Activated B cell treated with CpG ODN at 0.5 μM for 24 hours (primary cell): ENCODE measurements at regions of chr7 and their contacts with region 1.

Region 1: DNA sequence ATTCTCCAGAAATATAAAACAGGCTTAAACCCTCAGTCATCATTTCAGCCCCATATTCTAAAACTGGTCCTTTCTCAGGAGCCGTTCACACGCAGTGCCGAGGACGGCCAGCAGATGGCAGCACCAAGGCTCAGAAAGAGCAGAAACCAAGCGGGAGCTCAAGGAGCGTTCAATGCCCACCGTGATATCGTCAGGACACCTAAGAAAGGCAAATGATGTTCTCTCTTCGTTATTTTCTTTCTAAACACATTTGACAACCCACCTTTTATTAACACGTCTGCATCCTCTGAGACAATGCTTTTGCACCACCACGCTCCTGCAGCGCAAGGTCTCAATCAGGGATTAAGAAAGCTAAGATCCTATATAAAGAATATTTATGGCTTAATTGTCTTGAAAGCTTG is 45.7 kb upstream of the RBM33 start:
- DNase-seq: peak; percentile 79
- ATAC-seq: peak; percentile 70
- H3K4me3 Mint-ChIP-seq: no peak overlapping the region
- H3K27ac Mint-ChIP-seq: no peak overlapping the region
- H3K4me1 Mint-ChIP-seq: peaks cover 3% of the 10 kb centered on the region
- H3K27me3 Mint-ChIP-seq: peaks cover 18% of the 10 kb centered on the region
- CTCF ChIP-seq: no peak

Region 2: DNA sequence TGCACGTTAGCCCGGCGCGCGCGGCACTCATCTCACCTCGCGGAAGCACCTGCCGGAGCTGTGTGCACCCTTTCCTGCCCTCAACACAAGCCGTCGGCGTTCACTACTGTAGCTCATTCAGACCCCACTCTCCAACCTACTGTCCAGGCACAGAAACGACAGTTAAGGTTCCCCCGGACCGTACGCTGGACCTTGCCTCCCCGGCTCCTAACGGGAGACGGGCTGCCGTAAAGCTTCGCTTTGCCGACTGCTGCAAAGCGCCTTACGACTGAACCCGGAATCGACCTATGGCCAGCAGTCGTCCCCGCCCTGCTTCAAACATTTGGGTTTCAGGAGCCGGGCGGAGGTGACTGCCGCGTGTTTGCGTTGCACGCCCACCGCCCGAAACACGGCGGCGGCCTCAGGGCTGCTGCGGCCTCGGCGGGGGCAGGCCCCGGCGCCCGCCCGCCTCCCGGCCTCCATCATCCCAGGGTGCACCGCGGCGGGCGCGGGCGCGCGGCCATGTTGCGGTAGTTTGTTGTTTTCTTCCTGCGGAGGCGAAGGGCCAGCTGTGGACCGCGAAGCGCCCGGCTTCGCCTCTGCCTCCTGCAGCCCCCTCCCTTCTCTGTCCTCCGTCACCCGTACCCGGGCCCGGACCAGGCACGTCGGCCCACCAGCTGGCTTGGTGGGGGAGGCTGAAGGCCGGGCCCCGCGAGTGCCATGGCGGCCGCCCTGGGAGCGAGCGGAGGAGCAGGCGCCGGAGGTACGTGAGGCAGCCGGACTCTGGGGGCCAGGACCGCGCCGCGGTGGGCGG is 45.6 kb after region 1 on chr7 and contains the start of gene RBM33:
- CTCF ChIA-PET with region 1: interaction called, 6 read pairs
- POLR2A ChIA-PET with region 1: interaction called, 3 read pairs
- intact Hi-C with region 1: loop called (anchors 2 kb)
- DNase-seq: peak; percentile 86
- ATAC-seq: peak; percentile 74
- H3K4me3 Mint-ChIP-seq: peak within 1 kb of the TSS; percentile 98
- H3K27ac Mint-ChIP-seq: peak within 1 kb of the TSS; percentile 98
- H3K4me1 Mint-ChIP-seq: peaks cover 47% of the 10 kb centered on the region
- H3K27me3 Mint-ChIP-seq: no peaks in the 10 kb centered on the region
- CTCF ChIP-seq: no peak
- total RNA-seq, gene RBM33: 107 and 117 TPM in 2 replicates

Region 3: GRCh38 chr7:155738652-155739537 is 140.1 kb after region 1 on chr7:
- CTCF ChIA-PET with region 1: interaction called, 123 read pairs
- POLR2A ChIA-PET with region 1: interaction called, 3 read pairs
- intact Hi-C with region 1: loop called (anchors 1 kb)
- DNase-seq: peak; percentile 42
- ATAC-seq: peak; percentile 64
- H3K4me3 Mint-ChIP-seq: no peak overlapping the region
- H3K27ac Mint-ChIP-seq: no peak overlapping the region
- H3K4me1 Mint-ChIP-seq: peaks cover 58% of the 10 kb centered on the region
- H3K27me3 Mint-ChIP-seq: no peaks in the 10 kb centered on the region
- CTCF ChIP-seq: peak; percentile 30

Region 4: DNA sequence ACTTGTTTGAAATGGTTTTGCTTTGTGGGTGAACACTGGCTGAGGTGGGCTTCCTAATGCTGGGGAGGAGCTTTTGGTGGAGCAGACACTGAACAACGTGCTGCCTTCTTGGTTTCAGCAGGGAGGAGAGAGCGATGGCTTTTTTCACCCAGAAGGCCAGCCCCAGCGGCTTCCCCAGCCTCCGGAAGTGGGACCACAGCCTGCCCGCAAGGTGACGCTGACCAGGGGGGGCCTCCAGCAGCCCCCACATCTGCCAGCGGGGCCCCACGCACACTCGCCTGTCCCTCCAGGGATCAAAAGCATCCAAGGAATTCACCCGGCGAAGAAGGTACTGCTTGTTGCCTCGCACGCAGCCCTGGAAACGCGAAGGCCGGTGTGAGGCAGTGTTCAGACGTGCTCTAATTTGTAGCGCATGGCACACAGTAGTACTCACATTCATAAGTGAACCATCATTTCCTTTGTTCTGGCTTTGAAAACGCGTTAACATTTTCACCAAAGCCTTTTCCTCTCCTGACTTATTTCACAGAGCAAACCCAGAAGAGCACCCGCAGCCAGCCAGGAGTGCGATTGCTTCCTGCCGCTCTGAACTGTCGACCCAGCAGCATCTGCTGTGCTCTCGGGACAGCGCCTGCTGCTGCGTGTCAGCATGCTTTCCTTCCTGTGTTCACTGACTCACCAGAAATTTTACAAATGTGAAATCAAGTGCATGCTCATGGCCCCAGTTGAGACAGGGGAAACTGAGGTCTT is 165.1 kb after region 1 on chr7:
- CTCF ChIA-PET with region 1: interaction called, 109 read pairs
- POLR2A ChIA-PET with region 1: interaction called, 3 read pairs
- intact Hi-C with region 1: loop called (anchors 1 kb)
- DNase-seq: no peak
- ATAC-seq: peak; percentile 54
- H3K4me3 Mint-ChIP-seq: peak overlapping the region; percentile 61
- H3K27ac Mint-ChIP-seq: peak overlapping the region; percentile 85
- H3K4me1 Mint-ChIP-seq: peaks cover 38% of the 10 kb centered on the region
- H3K27me3 Mint-ChIP-seq: no peaks in the 10 kb centered on the region
- CTCF ChIP-seq: no peak